Posterior cingulate gyrus (tissue), 11 donors: ENCODE measurements at regions of chr4 and their contacts with region 1.

Region 1: DNA sequence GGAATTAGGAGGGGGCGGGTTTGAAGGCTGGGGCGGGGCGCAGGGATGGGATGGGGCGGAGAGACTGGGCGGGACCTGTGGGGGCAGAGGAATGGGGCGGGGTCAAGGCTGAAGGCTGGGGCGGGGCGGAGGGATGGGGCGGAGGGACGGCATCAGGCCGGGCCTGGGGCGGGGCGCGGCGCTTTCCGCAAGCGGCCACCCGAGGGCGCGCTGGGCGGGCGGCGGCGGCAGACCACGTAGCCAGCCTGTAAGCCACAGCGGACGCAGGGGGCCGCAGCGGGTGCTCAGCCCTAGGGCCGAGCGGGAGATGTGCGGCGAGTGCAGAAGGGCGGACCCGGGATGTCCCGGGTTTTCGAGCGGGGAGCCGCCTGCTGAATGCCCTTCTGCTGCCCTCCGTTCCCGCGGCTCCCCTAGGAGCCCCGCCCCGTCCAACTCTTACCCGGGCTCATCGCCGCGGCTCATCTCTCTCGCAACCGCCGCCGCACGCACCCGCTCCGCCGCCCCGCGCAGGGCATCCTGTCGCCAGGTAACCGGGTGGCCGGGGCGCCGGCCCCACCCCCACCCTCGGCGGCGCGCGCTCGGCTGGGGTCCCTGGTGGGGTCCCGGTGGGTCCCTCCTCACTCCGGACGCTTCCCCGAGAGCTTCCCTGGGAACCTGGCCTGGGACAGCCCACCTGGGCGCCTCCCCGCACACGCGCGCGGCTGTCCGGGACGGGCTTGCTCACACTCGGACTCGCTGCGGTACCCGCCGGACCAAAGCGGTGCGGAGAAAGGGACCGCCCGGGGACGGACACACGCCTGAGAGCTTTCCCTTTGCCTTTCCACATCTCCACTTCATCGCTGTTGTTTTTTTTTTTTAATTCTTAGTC is at the start of gene CCDC110:
- DNase-seq: peak; percentile 81 to 99 (median 93)

Region 2: DNA sequence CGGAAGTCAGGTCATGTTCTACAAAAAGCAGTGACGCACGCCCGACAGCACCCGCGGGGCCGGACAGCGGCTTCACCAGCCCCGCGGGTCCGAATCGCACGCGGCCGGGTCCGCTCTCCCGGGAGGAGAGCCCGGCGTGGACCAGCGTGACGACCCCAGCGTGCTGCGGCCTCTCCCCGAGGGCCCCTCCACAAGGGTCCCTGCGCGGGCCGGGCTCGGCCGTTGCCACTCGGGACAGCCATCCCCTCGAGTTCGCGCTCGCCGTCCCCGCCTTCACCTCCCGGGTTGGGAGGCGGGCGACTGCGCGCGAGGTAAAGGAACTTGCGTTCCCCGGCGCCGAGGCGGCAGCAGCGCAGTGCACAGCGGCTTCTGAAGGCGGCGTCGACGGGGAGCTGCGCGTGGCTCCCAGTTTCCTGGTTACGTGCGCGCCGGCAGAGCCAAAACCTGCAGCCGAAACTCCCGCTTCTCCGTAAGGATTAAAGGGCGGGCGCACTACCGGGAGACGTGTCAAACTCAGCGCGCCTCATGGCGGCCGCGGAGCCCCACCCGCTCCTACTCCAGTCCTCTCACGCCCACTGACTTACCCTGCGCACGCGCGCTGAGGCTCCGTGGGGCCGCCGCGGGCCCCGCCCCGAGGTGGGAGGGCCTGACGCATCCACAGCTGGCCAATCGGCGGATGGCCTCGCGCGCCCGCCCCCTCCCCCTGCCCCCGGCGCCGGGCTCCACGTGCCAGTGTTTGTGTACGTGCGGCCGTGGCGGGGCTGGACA is 75.3 kb before region 1 on chr4:
- intact Hi-C with region 1: loop called (anchors 2 kb)
- DNase-seq: peak; percentile 93 to 100 (median 97)

Region 3: GRCh38 chr4:185425647-185426352 is 45.7 kb before region 1 on chr4 and contains the start of gene UFSP2:
- intact Hi-C with region 1: loop called (anchors 2 kb)
- DNase-seq: peak; percentile 79 to 98 (median 88)

Region 4: DNA sequence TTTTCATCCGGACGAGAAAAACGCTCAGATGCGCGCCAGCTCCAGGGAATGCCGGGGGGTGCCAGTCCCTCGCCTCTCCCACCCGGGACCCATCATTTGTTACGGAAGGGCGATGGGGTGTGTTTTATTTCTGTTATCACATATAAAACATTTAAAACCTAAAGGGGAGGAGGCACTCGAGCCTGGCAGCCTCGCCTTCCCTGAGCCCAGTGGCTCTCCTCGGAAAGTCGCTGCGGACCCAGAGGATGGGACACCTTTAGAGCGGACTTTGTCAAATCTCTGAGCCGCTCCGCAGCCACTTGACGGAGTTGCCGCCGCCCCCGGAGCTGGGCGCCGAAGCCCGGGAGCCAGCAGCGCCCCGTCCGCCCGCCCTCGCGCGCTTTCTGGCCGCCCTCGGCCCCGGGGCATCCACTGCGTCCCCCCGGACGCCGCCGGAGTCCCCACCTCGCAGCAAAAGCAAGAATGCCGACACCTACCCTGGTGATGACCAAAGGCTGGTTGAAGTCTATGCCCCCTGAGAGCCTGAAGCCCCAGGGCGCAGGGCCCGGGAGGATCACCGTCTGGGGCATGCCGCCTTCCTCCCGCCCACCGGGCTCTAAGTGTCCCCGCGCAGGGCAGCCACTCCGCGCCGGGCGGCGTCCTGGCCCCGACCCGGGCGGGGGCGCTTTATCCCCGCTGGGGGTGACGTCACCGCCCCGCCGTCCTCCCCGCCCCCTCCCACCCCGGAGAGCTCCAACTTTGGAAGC is 63.6 kb after region 1 on chr4 and contains the start of gene PDLIM3:
- intact Hi-C with region 1: loop called (anchors 10 kb)
- DNase-seq: peak; percentile 20 to 92 (median 45)

Region 5: DNA sequence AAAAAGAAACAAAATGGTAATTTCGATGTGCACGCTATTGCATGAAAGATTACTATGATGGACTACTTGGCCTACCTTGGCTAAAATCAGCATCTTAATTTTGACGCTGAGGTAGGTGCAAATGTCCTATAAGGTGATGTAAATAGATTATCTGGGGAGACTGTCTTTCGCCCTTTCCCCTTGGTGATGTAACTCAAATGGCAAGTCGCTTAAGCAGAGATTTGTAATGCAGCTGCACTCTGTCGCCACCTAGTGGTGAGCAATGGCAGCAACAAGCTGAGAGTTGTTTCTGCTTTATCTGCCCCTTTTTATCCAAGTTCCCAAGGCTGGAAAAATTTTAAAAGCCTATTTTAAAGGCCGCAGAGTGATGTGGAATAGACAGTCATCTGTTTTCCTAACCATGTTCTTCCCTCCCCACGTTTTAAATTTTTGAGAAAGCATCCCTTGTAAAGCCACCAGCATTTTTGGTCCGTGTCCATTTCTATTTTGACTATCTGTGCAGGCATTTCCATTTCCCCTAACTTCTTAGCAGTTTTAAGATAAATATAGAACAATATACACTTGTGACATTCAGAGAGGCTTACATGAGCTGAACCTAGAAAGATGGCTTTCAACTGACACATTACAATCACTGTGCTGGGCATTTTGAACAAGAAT is 126.2 kb after region 1 on chr4:
- intact Hi-C with region 1: loop called (anchors 1 kb)
- DNase-seq: peak; percentile 43 to 95 (median 79)